ENCODE measurements at regions of chr1 and their contacts with region 1.

Region 1: DNA sequence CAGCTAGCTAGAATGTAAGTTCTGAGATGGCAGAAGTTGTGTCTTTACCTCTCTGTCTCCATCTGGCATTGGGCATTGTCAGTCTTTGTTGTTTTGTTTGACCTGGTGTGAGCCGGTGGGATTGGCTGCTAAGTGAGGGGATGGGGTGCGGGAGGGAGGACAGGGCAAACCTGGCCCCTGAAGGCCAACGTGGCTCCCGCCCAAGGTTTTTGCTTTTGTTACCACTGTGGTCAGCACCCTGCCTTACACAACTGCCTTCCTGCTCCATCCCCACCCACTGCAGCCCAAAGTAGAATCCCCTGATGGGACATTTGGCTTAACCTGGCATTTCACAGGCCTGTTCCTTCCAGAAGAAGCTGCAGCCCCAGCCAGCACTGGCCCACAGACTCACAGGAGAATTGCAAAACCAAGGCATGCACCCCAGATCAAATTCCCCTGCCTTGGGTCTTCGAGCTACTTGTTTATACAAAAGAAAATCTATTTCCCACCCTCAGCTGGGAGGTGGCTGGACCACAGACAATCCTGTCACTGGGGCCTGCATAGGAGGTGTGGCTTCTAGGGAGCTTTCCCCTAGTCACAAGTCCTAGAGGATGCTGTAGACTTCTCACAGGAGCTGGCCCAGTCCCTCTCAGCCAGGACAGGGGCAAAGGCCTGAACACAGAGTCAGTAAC is 147.5 kb downstream of the TRABD2B start:
- DNase-seq: no peak
- H3K4me3 ChIP-seq: no peak overlapping the region
- H3K27ac ChIP-seq: no peak overlapping the region
- H3K4me1 ChIP-seq: no peaks in the 10 kb centered on the region
- H3K27me3 ChIP-seq: no peaks in the 10 kb centered on the region
- CTCF ChIP-seq: no peak

Region 2: GRCh38 chr1:47809301-47810084 is 40.2 kb before region 1 on chr1:
- CTCF ChIA-PET with region 1: no interaction called
- dilution Hi-C with region 1: loop called (anchors 5 kb)
- in situ Hi-C with region 1: no loop called
- intact Hi-C with region 1: no loop called
- DNase-seq: no peak
- H3K4me3 ChIP-seq: no peak overlapping the region
- H3K27ac ChIP-seq: no peak overlapping the region
- H3K4me1 ChIP-seq: peaks cover 12% of the 10 kb centered on the region
- H3K27me3 ChIP-seq: no peaks in the 10 kb centered on the region
- CTCF ChIP-seq: no peak

Region 3: DNA sequence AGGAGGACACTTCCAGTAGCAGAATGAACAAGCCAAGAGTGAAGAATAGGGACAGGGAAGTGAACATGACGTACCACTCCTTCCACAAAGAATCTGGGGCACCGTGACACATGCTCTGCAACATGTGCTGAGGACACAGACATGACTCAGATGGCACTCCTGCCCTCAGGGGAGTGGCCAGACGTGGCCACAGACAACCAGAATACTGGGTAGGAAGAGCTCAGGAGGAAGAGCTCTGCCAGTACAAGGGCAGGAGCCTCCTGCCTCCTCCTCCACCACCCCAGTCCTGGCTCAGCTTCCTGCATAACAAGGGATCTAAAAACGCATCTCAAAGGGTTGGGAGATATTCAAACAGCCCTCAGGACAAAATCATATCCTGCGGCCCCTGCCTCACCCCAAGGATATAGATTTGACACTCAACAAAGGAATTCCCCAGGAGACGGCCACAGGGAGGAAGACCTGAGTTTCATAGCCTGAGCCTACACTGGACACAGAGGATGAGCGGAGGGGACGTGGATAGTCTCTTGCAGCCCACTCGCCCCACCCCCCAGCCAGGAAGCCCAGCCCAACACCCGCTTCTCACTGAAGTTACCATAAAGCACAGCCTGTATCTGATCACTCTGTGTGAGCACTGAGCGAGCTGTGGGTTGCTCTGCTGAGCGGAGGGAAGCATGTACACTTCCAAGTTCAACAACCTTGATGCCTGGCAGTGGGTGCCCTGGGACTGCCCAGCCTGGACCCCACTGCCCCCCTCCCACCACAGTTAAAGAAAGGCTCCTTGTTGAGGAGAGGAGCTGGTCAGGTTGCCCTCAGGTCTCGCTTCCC is 45.2 kb after region 1 on chr1:
- CTCF ChIA-PET with region 1: no interaction called
- dilution Hi-C with region 1: loop called (anchors 5 kb)
- in situ Hi-C with region 1: no loop called
- intact Hi-C with region 1: no loop called
- DNase-seq: peak; percentile 90
- H3K4me3 ChIP-seq: no peak overlapping the region
- H3K27ac ChIP-seq: peak overlapping the region; percentile 6
- H3K4me1 ChIP-seq: peaks cover 19% of the 10 kb centered on the region
- H3K27me3 ChIP-seq: no peaks in the 10 kb centered on the region
- CTCF ChIP-seq: no peak